HepG2 (cell line): ENCODE measurements at regions of chr20 and their contacts with region 1.

Region 1: GRCh38 chr20:1965520-1966351 is 28.1 kb downstream of the PDYN start:
- DNase-seq: peak; percentile 71
- ATAC-seq: peak; percentile 94
- H3K4me3 ChIP-seq: no peak overlapping the region
- H3K27ac ChIP-seq: no peak overlapping the region
- H3K4me1 ChIP-seq: peaks cover 5% of the 10 kb centered on the region; the same call in 1 of the 2 replicates
- H3K27me3 ChIP-seq: peaks cover 4 to 27% of the 10 kb centered on the region in 2 experiments; a peak in 4 of 5 replicates
- CTCF ChIP-seq: peak; percentile 100
- EP300 ChIP-seq: 0 out of 4 replicates have a peak, but pooled peaks of 1 of the 2 experiments have one; percentile 29
- POLR2A ChIP-seq: no peak
- RAD21 ChIP-seq: peak; percentile 98

Region 2: DNA sequence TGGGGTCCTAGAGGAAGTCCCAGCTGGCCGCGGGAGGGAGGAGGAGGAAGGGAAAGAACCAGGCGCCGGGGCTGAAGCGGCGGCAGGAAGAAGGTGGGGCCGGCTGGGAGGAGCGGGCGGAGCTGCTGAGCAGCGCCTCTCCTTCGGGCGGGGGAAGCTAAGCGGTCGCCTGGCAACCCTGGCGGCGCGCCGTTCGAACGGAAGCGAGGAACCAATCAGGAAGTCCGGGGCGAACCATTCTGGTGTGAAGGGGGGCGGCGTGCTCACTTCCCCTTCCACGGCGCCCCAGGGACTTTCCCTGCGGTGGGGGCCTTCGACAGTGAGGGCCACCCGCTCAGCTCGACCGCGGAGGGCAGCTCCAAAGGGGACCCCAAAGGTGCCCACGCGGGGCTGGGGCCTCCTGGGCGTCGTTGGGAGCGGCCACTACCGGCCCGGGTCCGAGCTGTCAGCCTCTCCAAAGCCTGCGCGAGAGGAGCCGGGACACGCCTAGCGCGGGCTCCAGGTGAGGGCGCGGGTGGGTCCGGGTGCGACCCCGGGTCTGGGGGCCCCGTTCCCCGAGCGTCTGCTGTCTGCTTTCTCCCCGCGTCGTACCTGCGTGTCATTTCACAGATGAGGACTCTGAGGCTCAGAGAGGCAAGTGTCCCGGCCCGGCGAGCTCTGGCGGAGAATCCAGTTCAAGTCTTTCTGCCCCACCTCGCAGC is 1132.1 kb before region 1 on chr20 and contains the start of gene FAM110A:
- CTCF ChIA-PET with region 1: no interaction called
- POLR2A ChIA-PET with region 1: no interaction called
- in situ Hi-C with region 1: no loop called
- intact Hi-C with region 1: loop called (anchors 5 kb)
- DNase-seq: peak; percentile 90
- ATAC-seq: peak; percentile 98
- H3K4me3 ChIP-seq: peak within 1 kb of the TSS; percentile 66 to 81 (median 73)
- H3K27ac ChIP-seq: peak within 1 kb of the TSS; percentile 37
- H3K4me1 ChIP-seq: peaks cover 15% of the 10 kb centered on the region
- H3K27me3 ChIP-seq: peaks cover 0 to 7% of the 10 kb centered on the region in 2 experiments; a peak in 3 of 5 replicates
- CTCF ChIP-seq: peak; percentile 38
- EP300 ChIP-seq: no peak; a peak in 1 of 4 replicates
- POLR2A ChIP-seq: no peak
- RAD21 ChIP-seq: no peak; the same call in none of the 2 replicates
- total RNA-seq, gene FAM110A: 1.7 and 1.9 TPM in 2 replicates

Region 3: DNA sequence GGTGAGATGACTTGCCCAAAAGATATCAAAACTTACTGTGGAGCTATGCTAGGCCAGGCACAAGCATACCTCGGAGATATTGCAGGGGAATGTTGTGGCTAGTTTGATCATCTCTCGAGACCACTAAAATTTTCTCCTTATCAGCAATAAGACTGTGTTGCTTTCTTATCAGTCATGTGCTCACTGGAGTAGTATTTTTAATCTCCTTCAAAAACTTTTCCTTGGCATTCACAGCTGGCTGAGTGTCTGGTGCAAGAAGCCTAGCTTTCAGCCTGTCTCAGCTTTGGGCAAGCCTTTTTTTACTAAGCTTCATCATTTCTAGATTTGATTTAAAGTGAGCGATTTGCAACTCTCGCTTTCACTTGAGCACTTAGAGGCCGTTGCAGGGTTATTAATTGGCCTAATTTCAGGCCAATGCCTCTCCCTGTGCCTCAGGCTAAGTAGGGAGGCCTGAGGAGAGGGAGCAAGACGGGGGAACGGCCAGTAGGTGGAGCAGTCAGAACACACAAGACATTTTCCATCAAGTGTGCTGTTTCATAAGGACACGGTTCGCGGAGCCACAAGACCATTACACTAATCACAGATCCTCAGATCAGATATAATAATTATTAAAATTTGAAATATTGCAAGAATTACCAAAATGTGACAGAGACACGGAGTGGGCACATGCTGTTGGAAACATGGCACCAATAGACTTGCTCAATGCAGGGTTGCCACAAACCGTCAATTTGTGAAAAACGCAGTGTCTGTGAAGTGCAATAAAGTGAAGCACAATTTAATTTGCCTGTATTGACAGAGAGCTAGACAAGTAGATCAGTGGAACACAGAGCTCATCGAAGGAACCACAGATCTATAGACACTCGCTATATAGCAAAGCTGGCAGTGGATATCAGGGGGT is 201.4 kb before region 1 on chr20:
- CTCF ChIA-PET with region 1: interaction called, 3 read pairs
- POLR2A ChIA-PET with region 1: no interaction called
- in situ Hi-C with region 1: no loop called
- intact Hi-C with region 1: loop called (anchors 5 kb)
- DNase-seq: peak; percentile 73
- ATAC-seq: peak; percentile 99
- H3K4me3 ChIP-seq: no peak overlapping the region
- H3K27ac ChIP-seq: no peak overlapping the region
- H3K4me1 ChIP-seq: no peaks in the 10 kb centered on the region
- H3K27me3 ChIP-seq: no peaks in the 10 kb centered on the region; a peak in 1 of 5 replicates
- CTCF ChIP-seq: peak; percentile 90
- EP300 ChIP-seq: no peak
- POLR2A ChIP-seq: no peak
- RAD21 ChIP-seq: peak; percentile 45; the same call in 1 of the 2 replicates

Region 4: DNA sequence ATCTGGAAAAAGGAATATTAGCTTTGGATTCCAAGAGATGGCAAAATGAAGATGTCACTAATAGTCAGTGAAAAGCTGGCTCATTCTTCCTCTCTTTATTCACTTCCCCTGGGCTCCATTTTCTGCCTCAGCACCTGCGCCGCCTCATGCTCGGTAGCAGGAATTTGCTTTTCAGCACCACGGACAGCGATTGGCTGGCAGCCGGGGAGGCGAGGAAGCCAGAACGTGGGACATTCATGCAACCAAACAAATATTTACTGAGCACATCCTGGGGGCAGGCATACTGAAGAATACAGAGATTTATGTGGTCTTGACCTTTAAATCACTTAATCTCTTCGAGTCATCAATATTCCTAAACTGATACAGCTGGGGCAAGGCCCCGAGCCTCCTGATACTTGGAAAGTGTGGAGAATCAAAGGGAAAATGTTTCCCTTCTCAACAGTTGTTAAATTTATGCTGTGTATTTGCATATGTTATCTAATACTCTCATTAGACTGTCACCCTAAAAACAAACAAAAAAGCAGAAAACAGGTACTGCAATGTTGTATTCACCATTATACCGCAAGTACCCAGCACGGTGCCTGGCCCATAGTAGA is 40.2 kb after region 1 on chr20:
- CTCF ChIA-PET with region 1: no interaction called
- POLR2A ChIA-PET with region 1: no interaction called
- in situ Hi-C with region 1: no loop called
- intact Hi-C with region 1: loop called (anchors 5 kb)
- DNase-seq: peak; percentile 78
- ATAC-seq: peak; percentile 89
- H3K4me3 ChIP-seq: no peak overlapping the region
- H3K27ac ChIP-seq: no peak overlapping the region
- H3K4me1 ChIP-seq: peaks cover 9% of the 10 kb centered on the region
- H3K27me3 ChIP-seq: no peaks in the 10 kb centered on the region
- CTCF ChIP-seq: peak; percentile 48
- EP300 ChIP-seq: no peak; a peak in 1 of 4 replicates
- POLR2A ChIP-seq: no peak
- RAD21 ChIP-seq: no peak

Region 5: DNA sequence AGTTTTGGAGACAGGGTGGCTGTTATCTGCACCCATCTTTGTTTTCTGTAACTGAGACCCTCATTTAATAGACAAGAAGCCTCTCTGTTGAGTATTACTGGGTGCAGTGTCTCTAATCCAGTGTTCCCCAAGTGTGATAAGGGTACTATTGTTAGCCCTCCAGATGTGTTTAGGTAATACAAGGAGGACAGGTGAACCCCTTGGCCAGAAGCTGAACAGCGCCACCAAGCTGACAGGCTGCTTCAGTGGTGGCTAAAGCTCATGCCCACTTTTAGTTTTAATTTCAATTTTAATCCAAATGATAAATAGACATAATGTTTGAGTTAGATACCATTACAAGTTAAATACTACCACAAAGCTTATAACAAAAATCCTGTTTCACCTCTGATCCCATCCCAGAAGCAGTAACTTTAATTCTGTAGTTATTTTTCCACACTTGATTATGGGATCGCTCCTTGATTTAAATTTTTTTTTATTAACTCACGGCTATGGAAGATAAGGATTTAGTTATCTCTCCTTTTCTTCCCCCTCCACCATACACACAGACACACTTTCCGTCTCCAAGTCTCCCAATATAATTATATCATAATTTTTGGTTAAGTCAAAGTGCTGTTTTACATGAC is 127.5 kb after region 1 on chr20:
- CTCF ChIA-PET with region 1: interaction called, 37 read pairs
- POLR2A ChIA-PET with region 1: no interaction called
- in situ Hi-C with region 1: loop called (anchors 5 kb)
- intact Hi-C with region 1: loop called (anchors 1 kb)
- DNase-seq: peak; percentile 50
- ATAC-seq: peak; percentile 85
- H3K4me3 ChIP-seq: no peak overlapping the region
- H3K27ac ChIP-seq: no peak overlapping the region
- H3K4me1 ChIP-seq: no peaks in the 10 kb centered on the region
- H3K27me3 ChIP-seq: peaks cover 0 to 2% of the 10 kb centered on the region in 2 experiments; a peak in 1 of 5 replicates
- CTCF ChIP-seq: peak; percentile 92
- EP300 ChIP-seq: no peak
- POLR2A ChIP-seq: no peak
- RAD21 ChIP-seq: peak; percentile 86

Region 6: GRCh38 chr20:2172305-2173175 is 206.8 kb after region 1 on chr20:
- CTCF ChIA-PET with region 1: interaction called, 109 read pairs
- POLR2A ChIA-PET with region 1: no interaction called
- in situ Hi-C with region 1: loop called (anchors 5 kb)
- intact Hi-C with region 1: loop called (anchors 1 kb)
- DNase-seq: peak; percentile 55
- ATAC-seq: peak; percentile 84
- H3K4me3 ChIP-seq: no peak overlapping the region
- H3K27ac ChIP-seq: no peak overlapping the region
- H3K4me1 ChIP-seq: no peaks in the 10 kb centered on the region
- H3K27me3 ChIP-seq: peaks cover 2 to 22% of the 10 kb centered on the region in 2 experiments; a peak in 4 of 5 replicates
- CTCF ChIP-seq: peak; percentile 99
- EP300 ChIP-seq: no peak
- POLR2A ChIP-seq: no peak
- RAD21 ChIP-seq: peak; percentile 98